B cell (primary cell): ENCODE measurements at regions of chr19 and their contacts with region 1.

Region 1: GRCh38 chr19:11814029-11814699 is at the start of gene ZNF440:
- DNase-seq: peak; percentile 85
- ATAC-seq: peak; percentile 99
- H3K4me3 ChIP-seq: peak within 1 kb of the TSS; percentile 75 to 94 (median 82)
- H3K4me3 Mint-ChIP-seq: peak within 1 kb of the TSS; percentile 91
- H3K27ac ChIP-seq: peak within 1 kb of the TSS; percentile 39 to 66
- H3K27ac Mint-ChIP-seq: peak within 1 kb of the TSS; percentile 85
- H3K4me1 ChIP-seq: peaks cover 4 to 14% of the 10 kb centered on the region in 2 donors
- H3K4me1 Mint-ChIP-seq: peaks cover 29% of the 10 kb centered on the region
- H3K27me3 ChIP-seq: no peaks in the 10 kb centered on the region
- H3K27me3 Mint-ChIP-seq: no peaks in the 10 kb centered on the region
- CTCF ChIP-seq: no peak
- total RNA-seq, gene ZNF440: 22.4 and 23.4 TPM in 2 replicates

Region 2: GRCh38 chr19:11612816-11613511 is 201.2 kb before region 1 on chr19:
- CTCF ChIA-PET with region 1: no interaction called
- POLR2A ChIA-PET with region 1: no interaction called
- intact Hi-C with region 1: no loop called
- DNase-seq: no peak
- ATAC-seq: no peak
- H3K4me3 ChIP-seq: no peak overlapping the region
- H3K4me3 Mint-ChIP-seq: no peak overlapping the region
- H3K27ac ChIP-seq: no peak overlapping the region
- H3K27ac Mint-ChIP-seq: no peak overlapping the region
- H3K4me1 ChIP-seq: no peaks in the 10 kb centered on the region
- H3K4me1 Mint-ChIP-seq: peaks cover 4% of the 10 kb centered on the region
- H3K27me3 ChIP-seq: no peaks in the 10 kb centered on the region
- H3K27me3 Mint-ChIP-seq: no peaks in the 10 kb centered on the region
- CTCF ChIP-seq: no peak

Region 3: DNA sequence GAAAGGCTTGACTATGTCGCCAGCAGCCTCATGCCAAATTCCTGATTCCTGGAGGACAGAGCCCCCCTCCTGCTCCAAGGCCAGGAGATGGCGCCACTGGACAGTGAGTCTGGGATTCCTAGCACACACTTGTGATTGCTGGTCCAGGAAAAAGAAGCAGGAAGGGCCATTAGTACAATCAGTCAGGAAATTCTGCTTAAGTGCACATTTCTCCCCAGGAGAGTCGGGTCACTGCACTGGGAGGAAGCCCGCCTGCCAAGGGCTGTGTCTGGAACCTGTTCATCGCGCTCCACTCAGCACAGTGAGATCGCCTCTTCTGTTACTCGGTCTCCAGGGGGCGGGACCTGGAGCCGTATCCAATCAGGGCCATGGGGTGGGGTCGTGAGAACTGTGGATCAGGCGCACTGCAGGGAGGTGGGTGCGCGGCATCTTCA is 140.5 kb before region 1 on chr19:
- CTCF ChIA-PET with region 1: no interaction called
- POLR2A ChIA-PET with region 1: no interaction called
- intact Hi-C with region 1: no loop called
- DNase-seq: peak; percentile 42
- ATAC-seq: no peak
- H3K4me3 ChIP-seq: peak overlapping the region in 2 of 5 experiments; percentile 15 to 33
- H3K4me3 Mint-ChIP-seq: peak overlapping the region; percentile 74
- H3K27ac ChIP-seq: no peak overlapping the region
- H3K27ac Mint-ChIP-seq: no peak overlapping the region
- H3K4me1 ChIP-seq: peaks cover 10 to 12% of the 10 kb centered on the region in 2 donors
- H3K4me1 Mint-ChIP-seq: peaks cover 5% of the 10 kb centered on the region
- H3K27me3 ChIP-seq: peaks cover 0 to 18% (median 10%) of the 10 kb centered on the region in 4 experiments
- H3K27me3 Mint-ChIP-seq: peaks cover 20% of the 10 kb centered on the region
- CTCF ChIP-seq: peak; percentile 17

Region 4: DNA sequence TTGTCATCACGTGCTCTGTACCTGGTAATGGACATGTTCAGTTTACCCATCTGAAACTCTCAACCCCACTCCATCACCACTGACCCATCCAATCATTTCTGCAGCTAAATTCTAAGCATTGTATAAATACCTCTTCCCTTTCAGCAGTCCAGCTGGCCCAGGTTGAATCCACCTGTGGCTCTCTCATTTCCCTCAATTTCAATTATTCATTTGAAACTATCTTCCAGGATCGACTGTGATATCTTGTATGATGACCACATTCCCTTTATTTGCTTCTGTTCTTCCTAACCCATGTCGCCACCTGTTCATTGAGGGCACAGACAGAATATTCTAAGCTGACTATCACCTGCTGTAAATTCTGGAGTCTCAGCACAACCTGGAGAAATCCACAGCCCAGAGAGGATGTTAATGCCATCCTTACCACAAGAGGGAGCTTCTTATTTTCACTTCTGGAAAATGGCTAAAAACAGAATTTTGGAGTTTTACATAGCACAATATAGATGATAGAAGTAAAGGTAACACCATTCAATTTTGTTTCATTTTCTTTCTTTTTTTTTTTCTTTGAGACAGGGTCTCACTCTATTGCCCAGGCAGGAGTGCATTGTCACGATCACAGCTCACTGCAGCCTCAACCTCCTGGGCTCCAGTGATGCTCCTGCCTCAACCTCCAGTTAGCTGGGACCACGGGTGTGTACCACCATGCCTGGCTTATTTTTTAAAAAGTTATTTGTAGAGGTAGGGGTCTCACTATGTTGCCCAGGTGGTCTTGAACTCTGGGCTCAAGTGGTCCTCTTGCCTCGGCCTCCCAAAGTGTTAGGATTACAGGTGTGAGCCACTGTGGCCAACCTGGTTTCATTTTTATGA is 114.0 kb before region 1 on chr19:
- CTCF ChIA-PET with region 1: interaction called, 3 read pairs
- POLR2A ChIA-PET with region 1: no interaction called
- intact Hi-C with region 1: loop called (anchors 5 kb)
- DNase-seq: peak; percentile 54
- ATAC-seq: no peak
- H3K4me3 ChIP-seq: no peak overlapping the region
- H3K4me3 Mint-ChIP-seq: no peak overlapping the region
- H3K27ac ChIP-seq: no peak overlapping the region
- H3K27ac Mint-ChIP-seq: no peak overlapping the region
- H3K4me1 ChIP-seq: peaks cover 1% of the 10 kb centered on the region in 2 donors
- H3K4me1 Mint-ChIP-seq: peaks cover under 1% of the 10 kb centered on the region
- H3K27me3 ChIP-seq: peaks cover 0 to 7% (median 3%) of the 10 kb centered on the region in 4 experiments
- H3K27me3 Mint-ChIP-seq: peaks cover 11% of the 10 kb centered on the region
- CTCF ChIP-seq: peak; percentile 83

Region 5: GRCh38 chr19:11738746-11739620 is 75.2 kb before region 1 on chr19 and contains the start of gene ZNF823:
- CTCF ChIA-PET with region 1: no interaction called
- POLR2A ChIA-PET with region 1: no interaction called
- intact Hi-C with region 1: loop called (anchors 1 kb)
- DNase-seq: peak; percentile 94
- ATAC-seq: peak; percentile 99
- H3K4me3 ChIP-seq: peak within 1 kb of the TSS; percentile 36 to 92 (median 83)
- H3K4me3 Mint-ChIP-seq: peak within 1 kb of the TSS; percentile 99
- H3K27ac ChIP-seq: peak within 1 kb of the TSS in 1 of 2 donors; percentile 38
- H3K27ac Mint-ChIP-seq: peak within 1 kb of the TSS; percentile 89
- H3K4me1 ChIP-seq: peaks cover 15 to 19% of the 10 kb centered on the region in 2 donors
- H3K4me1 Mint-ChIP-seq: peaks cover 26% of the 10 kb centered on the region
- H3K27me3 ChIP-seq: no peaks in the 10 kb centered on the region
- H3K27me3 Mint-ChIP-seq: peaks cover 5% of the 10 kb centered on the region
- CTCF ChIP-seq: no peak
- total RNA-seq, gene ZNF823: 4.2 and 5.1 TPM in 2 replicates

Region 6: GRCh38 chr19:11848594-11849469 is 34.7 kb after region 1 on chr19 and contains the start of gene ZNF439:
- CTCF ChIA-PET with region 1: interaction called, 5 read pairs
- POLR2A ChIA-PET with region 1: no interaction called
- intact Hi-C with region 1: loop called (anchors 1 kb)
- DNase-seq: peak; percentile 93
- ATAC-seq: peak; percentile 97
- H3K4me3 ChIP-seq: peak within 1 kb of the TSS; percentile 57 to 85 (median 83)
- H3K4me3 Mint-ChIP-seq: peak within 1 kb of the TSS; percentile 90
- H3K27ac ChIP-seq: peak within 1 kb of the TSS; percentile 71 to 72
- H3K27ac Mint-ChIP-seq: peak within 1 kb of the TSS; percentile 96
- H3K4me1 ChIP-seq: peaks cover 20 to 24% of the 10 kb centered on the region in 2 donors
- H3K4me1 Mint-ChIP-seq: peaks cover 29% of the 10 kb centered on the region
- H3K27me3 ChIP-seq: no peaks in the 10 kb centered on the region
- H3K27me3 Mint-ChIP-seq: no peaks in the 10 kb centered on the region
- CTCF ChIP-seq: no peak
- total RNA-seq, gene ZNF439: 48.6 and 52.3 TPM in 2 replicates

Region 7: GRCh38 chr19:11881151-11881800 is 67.1 kb after region 1 on chr19:
- CTCF ChIA-PET with region 1: interaction called, 3 read pairs
- POLR2A ChIA-PET with region 1: no interaction called
- intact Hi-C with region 1: loop called (anchors 2 kb)
- DNase-seq: peak; percentile 78
- ATAC-seq: peak; percentile 56
- H3K4me3 ChIP-seq: no peak overlapping the region
- H3K4me3 Mint-ChIP-seq: no peak overlapping the region
- H3K27ac ChIP-seq: no peak overlapping the region
- H3K27ac Mint-ChIP-seq: no peak overlapping the region
- H3K4me1 ChIP-seq: peaks cover 0 to 6% of the 10 kb centered on the region in 2 donors
- H3K4me1 Mint-ChIP-seq: peaks cover 4% of the 10 kb centered on the region
- H3K27me3 ChIP-seq: no peaks in the 10 kb centered on the region
- H3K27me3 Mint-ChIP-seq: no peaks in the 10 kb centered on the region
- CTCF ChIP-seq: peak; percentile 77

Region 8: GRCh38 chr19:11987405-11988281 is 173.5 kb after region 1 on chr19:
- CTCF ChIA-PET with region 1: interaction called, 12 read pairs
- POLR2A ChIA-PET with region 1: no interaction called
- intact Hi-C with region 1: loop called (anchors 5 kb)
- DNase-seq: peak; percentile 93
- ATAC-seq: peak; percentile 93
- H3K4me3 ChIP-seq: peak overlapping the region; percentile 86 to 98 (median 97)
- H3K4me3 Mint-ChIP-seq: peak overlapping the region; percentile 96
- H3K27ac ChIP-seq: peak overlapping the region; percentile 85 to 92
- H3K27ac Mint-ChIP-seq: peak overlapping the region; percentile 89
- H3K4me1 ChIP-seq: peaks cover 0 to 5% of the 10 kb centered on the region in 2 donors
- H3K4me1 Mint-ChIP-seq: peaks cover 24% of the 10 kb centered on the region
- H3K27me3 ChIP-seq: no peaks in the 10 kb centered on the region
- H3K27me3 Mint-ChIP-seq: no peaks in the 10 kb centered on the region
- CTCF ChIP-seq: no peak

Region 9: GRCh38 chr19:12055783-12056182 is 241.6 kb after region 1 on chr19:
- CTCF ChIA-PET with region 1: no interaction called
- POLR2A ChIA-PET with region 1: no interaction called
- intact Hi-C with region 1: no loop called
- DNase-seq: no peak
- ATAC-seq: no peak
- H3K4me3 ChIP-seq: no peak overlapping the region
- H3K4me3 Mint-ChIP-seq: no peak overlapping the region
- H3K27ac ChIP-seq: no peak overlapping the region
- H3K27ac Mint-ChIP-seq: no peak overlapping the region
- H3K4me1 ChIP-seq: peaks cover 9 to 22% of the 10 kb centered on the region in 2 donors
- H3K4me1 Mint-ChIP-seq: peaks cover 14% of the 10 kb centered on the region
- H3K27me3 ChIP-seq: peaks cover 0 to 5% (median 2%) of the 10 kb centered on the region in 4 experiments
- H3K27me3 Mint-ChIP-seq: peaks cover 19% of the 10 kb centered on the region
- CTCF ChIP-seq: no peak